Ascending aorta (tissue), 2 donors: ENCODE measurements at regions of chr14 and their contacts with region 1.

Region 1: GRCh38 chr14:34875031-34875922 is at the start of gene BAZ1A:
- DNase-seq: peak; percentile 13 to 80
- H3K4me3 ChIP-seq: peak within 1 kb of the TSS; percentile 73 to 100
- H3K27ac ChIP-seq: peak within 1 kb of the TSS; percentile 99 to 100
- H3K4me1 ChIP-seq: peaks cover 3 to 7% of the 10 kb centered on the region in 2 donors
- H3K27me3 ChIP-seq: no peaks in the 10 kb centered on the region
- CTCF ChIP-seq: peak in 2 of 3 experiments; percentile 35 to 51
- total RNA-seq, gene BAZ1A: 11.2 TPM

Region 2: GRCh38 chr14:34059855-34060638 is 815.2 kb before region 1 on chr14:
- intact Hi-C with region 1: loop called (anchors 10 kb)
- DNase-seq: peak; percentile 21 to 88
- H3K4me3 ChIP-seq: peak overlapping the region; percentile 76 to 85
- H3K27ac ChIP-seq: peak overlapping the region; percentile 92 to 95
- H3K4me1 ChIP-seq: peaks cover 0 to 7% of the 10 kb centered on the region in 2 donors
- H3K27me3 ChIP-seq: no peaks in the 10 kb centered on the region
- CTCF ChIP-seq: peak in 2 of 3 experiments; percentile 34 to 35

Region 3: GRCh38 chr14:34714320-34715126 is 160.8 kb before region 1 on chr14 and contains the start of gene CFL2:
- intact Hi-C with region 1: loop called (anchors 5 kb)
- DNase-seq: peak; percentile 55 to 91
- H3K4me3 ChIP-seq: peak within 1 kb of the TSS; percentile 75 to 85
- H3K27ac ChIP-seq: peak within 1 kb of the TSS; percentile 88 to 99
- H3K4me1 ChIP-seq: peaks cover 0 to 23% of the 10 kb centered on the region in 2 donors
- H3K27me3 ChIP-seq: no peaks in the 10 kb centered on the region
- CTCF ChIP-seq: no peak
- total RNA-seq, gene CFL2: 49.0 TPM

Region 4: DNA sequence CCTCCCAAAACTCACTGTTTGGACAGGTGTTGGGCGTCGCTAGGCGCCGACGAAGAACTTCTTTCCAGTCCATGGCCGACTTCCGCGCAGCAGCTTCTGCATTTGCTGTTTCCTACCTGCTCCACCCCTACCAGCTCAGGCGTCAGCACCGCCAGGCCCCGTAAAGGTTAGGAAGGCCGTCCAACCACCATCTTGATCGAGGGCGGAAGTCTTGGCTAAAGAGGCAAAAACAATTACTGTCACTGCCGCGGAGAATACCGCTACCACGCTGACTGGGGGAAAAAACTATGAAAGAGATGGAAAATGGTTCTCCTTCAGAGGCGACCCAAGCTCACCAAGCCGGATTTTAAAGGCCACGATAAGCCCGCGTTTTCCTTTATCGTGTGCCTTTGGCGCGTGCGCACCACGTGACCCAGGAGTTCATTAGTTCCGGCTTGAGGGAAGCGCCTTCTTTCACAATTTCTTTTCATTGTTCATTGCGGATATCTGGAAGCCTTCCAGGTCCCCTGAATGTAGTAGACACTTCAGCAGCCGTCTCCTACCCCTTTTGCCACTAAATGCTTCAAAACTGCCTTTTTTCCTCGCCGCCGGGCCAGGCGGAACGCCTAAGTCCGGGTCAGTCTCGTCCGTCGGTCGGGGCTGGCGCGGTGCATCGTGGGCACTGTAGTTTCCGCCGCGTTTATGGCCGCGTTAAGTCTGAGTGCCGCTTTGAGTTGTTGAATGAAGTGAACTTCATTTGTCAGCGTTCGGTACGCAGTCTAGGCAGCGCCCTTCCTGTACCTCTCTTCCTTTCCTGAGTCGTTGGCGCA is 246.8 kb after region 1 on chr14 and contains the starts of genes PPP2R3C and PRORP:
- intact Hi-C with region 1: loop called (anchors 2 kb)
- DNase-seq: peak; percentile 74 to 94
- H3K4me3 ChIP-seq: peak within 1 kb of the TSS; percentile 83 to 92
- H3K27ac ChIP-seq: peak within 1 kb of the TSS; percentile 91 to 98
- H3K4me1 ChIP-seq: peaks cover 3 to 18% of the 10 kb centered on the region in 2 donors
- H3K27me3 ChIP-seq: no peaks in the 10 kb centered on the region
- CTCF ChIP-seq: no peak
- total RNA-seq, gene PPP2R3C: 63.6 TPM
- total RNA-seq, gene PRORP: 42.5 TPM

Region 5: DNA sequence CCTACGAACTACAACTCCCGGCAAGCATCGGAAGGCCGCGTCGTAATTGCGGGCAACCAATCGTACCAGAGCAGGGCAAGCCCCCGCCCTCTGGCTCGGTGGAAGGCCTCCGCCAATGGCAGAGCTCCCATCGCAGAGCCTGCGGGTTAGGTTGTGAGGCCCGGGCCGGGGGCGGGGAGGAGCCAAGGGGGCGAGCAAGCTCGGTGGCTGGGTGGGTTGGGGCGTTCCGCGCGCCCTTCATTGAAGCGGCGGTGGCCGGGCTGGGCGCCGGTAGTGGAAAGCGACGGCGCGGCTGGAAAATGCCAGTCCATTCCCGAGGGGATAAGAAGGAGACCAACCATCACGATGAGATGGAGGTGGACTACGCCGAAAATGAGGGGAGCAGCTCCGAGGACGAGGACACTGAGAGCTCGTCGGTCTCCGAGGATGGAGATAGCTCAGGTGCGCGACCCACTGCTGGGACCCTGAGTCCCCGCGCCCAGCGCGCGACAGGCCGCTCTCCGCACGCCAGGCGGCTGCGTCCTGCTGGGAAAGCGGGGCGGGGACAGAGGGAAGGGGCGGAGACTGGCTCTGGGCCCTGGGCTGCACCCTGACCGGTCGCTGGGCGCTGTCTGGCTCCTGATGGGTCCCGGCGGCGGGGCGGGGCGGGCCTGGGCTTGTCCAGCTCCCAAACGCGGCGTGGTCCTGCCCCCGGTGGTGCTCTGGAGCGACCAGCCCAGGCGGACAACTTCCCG is 951.1 kb after region 1 on chr14 and contains the start of gene BRMS1L:
- intact Hi-C with region 1: loop called (anchors 10 kb)
- DNase-seq: peak; percentile 96 to 99
- H3K4me3 ChIP-seq: peak within 1 kb of the TSS; percentile 90 to 92
- H3K27ac ChIP-seq: peak within 1 kb of the TSS; percentile 98 to 99
- H3K4me1 ChIP-seq: peaks cover 0 to 4% of the 10 kb centered on the region in 2 donors
- H3K27me3 ChIP-seq: no peaks in the 10 kb centered on the region
- CTCF ChIP-seq: no peak
- total RNA-seq, gene BRMS1L: 7.7 TPM